MCF 10A (cell line): ENCODE measurements at regions of chr16 and their contacts with region 1.

Region 1: GRCh38 chr16:30018731-30019158 is 4.3 kb upstream of the C16orf92 start:
- DNase-seq: peak; percentile 37
- H3K4me3 Mint-ChIP-seq: no peak overlapping the region
- H3K27ac Mint-ChIP-seq: no peak overlapping the region
- H3K4me1 Mint-ChIP-seq: peaks cover 6% of the 10 kb centered on the region
- H3K27me3 Mint-ChIP-seq: no peaks in the 10 kb centered on the region
- CTCF ChIP-seq: no peak

Region 2: DNA sequence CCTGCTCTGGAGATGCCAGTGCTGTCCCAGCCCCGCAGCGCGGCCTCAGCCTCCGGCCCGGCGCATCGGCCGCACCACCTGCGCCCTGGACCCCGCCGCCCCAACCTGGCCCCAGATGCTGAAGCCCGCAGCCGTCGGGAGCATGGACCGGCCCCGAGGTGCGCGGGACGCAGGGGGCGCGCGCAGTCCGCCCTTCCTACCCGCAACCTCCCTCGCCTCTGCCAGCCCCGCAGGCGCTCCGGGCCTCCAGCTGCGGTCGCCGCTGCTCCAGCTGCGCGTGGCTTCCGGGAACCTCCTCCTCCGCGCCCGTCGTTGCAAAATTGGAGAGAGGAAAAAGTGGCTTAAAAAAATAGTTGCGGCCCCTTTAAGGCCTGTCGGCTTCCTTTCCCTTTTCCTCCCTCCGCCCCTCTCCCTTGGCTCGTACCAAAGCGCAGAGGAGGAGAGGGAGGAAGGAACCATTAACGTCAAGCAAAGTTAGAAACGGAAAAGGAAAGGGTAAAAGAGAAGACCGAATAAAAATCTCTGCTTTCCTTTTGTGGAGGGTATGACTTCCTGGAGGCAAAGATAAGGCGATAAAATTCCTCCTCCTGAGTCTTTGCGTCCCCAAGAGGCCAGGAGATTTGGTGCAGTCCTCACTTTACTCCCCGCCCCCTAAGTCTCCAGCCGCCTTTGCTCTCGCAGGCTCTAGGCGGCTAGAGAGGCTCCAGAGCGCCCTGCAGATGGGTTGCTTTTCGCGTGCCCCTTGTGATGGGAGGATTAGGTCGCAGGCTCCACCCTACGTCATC is 155.7 kb before region 1 on chr16 and contains the start of gene CDIPT:
- CTCF ChIA-PET with region 1: no interaction called
- POLR2A ChIA-PET with region 1: no interaction called
- intact Hi-C with region 1: loop called (anchors 2 kb)
- DNase-seq: peak; percentile 96
- H3K4me3 Mint-ChIP-seq: peak within 1 kb of the TSS; percentile 99
- H3K27ac Mint-ChIP-seq: peak within 1 kb of the TSS; percentile 99
- H3K4me1 Mint-ChIP-seq: peaks cover 14% of the 10 kb centered on the region
- H3K27me3 Mint-ChIP-seq: no peaks in the 10 kb centered on the region
- CTCF ChIP-seq: no peak
- total RNA-seq, gene CDIPT: 41.3 and 42.7 TPM in 2 replicates

Region 3: GRCh38 chr16:30082545-30083090 is 63.9 kb after region 1 on chr16:
- CTCF ChIA-PET with region 1: no interaction called
- POLR2A ChIA-PET with region 1: no interaction called
- intact Hi-C with region 1: no loop called
- DNase-seq: no peak
- H3K4me3 Mint-ChIP-seq: no peak overlapping the region
- H3K27ac Mint-ChIP-seq: no peak overlapping the region
- H3K4me1 Mint-ChIP-seq: peaks cover 9% of the 10 kb centered on the region
- H3K27me3 Mint-ChIP-seq: no peaks in the 10 kb centered on the region
- CTCF ChIP-seq: no peak

Region 4: GRCh38 chr16:30131869-30132475 is 113.2 kb after region 1 on chr16:
- CTCF ChIA-PET with region 1: no interaction called
- POLR2A ChIA-PET with region 1: no interaction called
- intact Hi-C with region 1: no loop called
- DNase-seq: no peak
- H3K4me3 Mint-ChIP-seq: no peak overlapping the region
- H3K27ac Mint-ChIP-seq: no peak overlapping the region
- H3K4me1 Mint-ChIP-seq: no peaks in the 10 kb centered on the region
- H3K27me3 Mint-ChIP-seq: no peaks in the 10 kb centered on the region
- CTCF ChIP-seq: no peak